ENCODE measurements at regions of chr18 and their contacts with region 1.

Region 1: DNA sequence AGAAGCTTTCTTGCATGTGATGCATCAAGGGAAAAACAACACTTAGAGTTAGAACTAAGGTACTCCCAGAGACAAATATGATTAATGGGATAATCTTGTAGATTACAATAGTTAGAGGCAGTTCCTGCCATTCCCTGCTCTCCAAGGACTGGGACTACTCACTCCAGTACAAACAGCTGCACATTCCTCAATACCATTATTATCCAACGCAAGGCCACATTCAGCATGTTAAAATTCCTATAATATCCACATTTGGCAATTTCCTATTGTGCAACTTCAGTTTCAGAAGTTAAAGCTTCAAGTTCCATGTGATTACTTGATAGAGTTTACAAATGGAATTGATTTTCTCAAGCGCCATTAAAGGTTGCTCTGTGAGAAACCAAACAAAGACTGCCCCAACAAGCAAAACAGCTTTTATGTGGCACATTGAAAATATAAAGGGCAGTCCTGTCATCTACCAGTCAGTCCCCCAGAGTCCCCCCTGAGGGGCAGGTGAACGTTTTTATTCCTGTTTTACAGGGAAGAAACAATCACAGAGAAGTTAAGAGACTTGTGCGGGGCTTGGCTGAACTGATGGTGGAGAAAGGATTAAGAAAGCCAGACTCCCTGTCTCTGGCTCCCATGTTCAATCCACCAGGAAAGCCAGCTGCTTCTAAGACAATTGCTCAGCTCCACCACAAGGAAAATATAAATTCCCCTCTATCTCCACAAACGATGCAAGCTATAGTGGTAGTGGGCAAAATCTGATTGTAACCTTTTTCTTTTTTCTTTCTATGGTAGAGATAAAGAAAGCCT is 72.6 kb downstream of the TXNL1 start:
- DNase-seq: peak; percentile 27
- H3K4me3 ChIP-seq: no peak overlapping the region
- H3K27ac ChIP-seq: peak overlapping the region; percentile 1 to 66; a peak in 1 of 4 replicates
- H3K4me1 ChIP-seq: peaks cover 4 to 8% of the 10 kb centered on the region in 2 experiments; a peak in 3 of 4 replicates
- H3K27me3 ChIP-seq: no peaks in the 10 kb centered on the region
- CTCF ChIP-seq: no peak
- EP300 ChIP-seq: no peak
- RAD21 ChIP-seq: no peak

Region 2: GRCh38 chr18:56575819-56576663 is 10.3 kb after region 1 on chr18:
- CTCF ChIA-PET with region 1: interaction called, 22 read pairs
- POLR2A ChIA-PET with region 1: no interaction called
- DNase-seq: peak; percentile 67
- H3K4me3 ChIP-seq: no peak overlapping the region; a peak in 1 of 4 replicates
- H3K27ac ChIP-seq: no peak overlapping the region
- H3K4me1 ChIP-seq: peaks cover 0 to 4% of the 10 kb centered on the region in 2 experiments; a peak in 2 of 4 replicates
- H3K27me3 ChIP-seq: no peaks in the 10 kb centered on the region
- CTCF ChIP-seq: peak; percentile 79
- EP300 ChIP-seq: no peak
- RAD21 ChIP-seq: peak; percentile 91